ENCODE measurements at regions of chr3 and their contacts with region 1.

Region 1: DNA sequence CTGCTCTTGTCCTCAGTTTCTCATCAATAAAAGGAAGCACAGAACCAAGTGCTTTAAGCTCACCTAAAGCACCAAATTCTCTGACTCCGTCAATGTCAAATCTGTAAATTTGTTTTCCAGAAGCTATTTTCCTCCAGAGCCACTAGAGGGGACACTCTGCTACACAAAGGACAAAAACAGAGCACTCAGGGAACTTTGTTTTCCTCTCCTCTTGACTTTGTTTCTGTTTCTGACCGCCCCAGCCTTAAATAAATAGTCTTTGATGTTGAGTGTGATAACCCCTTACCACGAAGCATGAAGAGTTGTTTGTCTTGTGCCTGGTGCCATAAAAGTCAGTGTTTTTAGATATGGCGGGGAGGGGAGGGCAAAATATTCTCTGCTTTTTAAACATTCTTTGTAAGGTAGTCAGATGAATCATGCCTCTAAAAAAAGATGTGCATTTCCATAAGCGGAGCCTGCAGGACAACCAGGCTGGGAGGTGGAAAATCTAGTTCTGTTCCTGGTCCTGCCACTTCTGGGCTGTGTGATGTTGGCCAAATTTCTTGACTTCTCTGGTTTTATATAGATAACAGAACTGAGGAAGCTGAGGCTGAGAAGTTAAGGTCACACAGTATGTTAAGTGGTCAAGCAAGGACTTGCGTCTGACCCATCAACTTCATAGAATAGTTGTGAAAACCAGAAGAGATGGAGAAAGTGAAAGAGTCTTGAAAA is 7.3 kb upstream of the ZBTB38 start:
- DNase-seq: peak; percentile 59 to 94
- H3K4me3 ChIP-seq: no peak overlapping the region
- H3K27ac ChIP-seq: no peak overlapping the region
- H3K4me1 ChIP-seq: peaks cover 8% of the 10 kb centered on the region
- H3K27me3 ChIP-seq: peaks cover 9% of the 10 kb centered on the region
- CTCF ChIP-seq: peak; percentile 84

Region 2: GRCh38 chr3:140941434-140942220 is 419.4 kb before region 1 on chr3 and contains the start of gene SLC25A36:
- CTCF ChIA-PET with region 1: no interaction called
- POLR2A ChIA-PET with region 1: no interaction called
- intact Hi-C with region 1: no loop called
- DNase-seq: peak; percentile 96
- H3K4me3 ChIP-seq: peak within 1 kb of the TSS; percentile 76
- H3K27ac ChIP-seq: peak within 1 kb of the TSS; percentile 77
- H3K4me1 ChIP-seq: peaks cover 18% of the 10 kb centered on the region
- H3K27me3 ChIP-seq: no peaks in the 10 kb centered on the region
- CTCF ChIP-seq: no peak
- total RNA-seq, gene SLC25A36: 76.5 and 90.1 TPM in 2 replicates

Region 3: GRCh38 chr3:141311496-141312353 is 49.3 kb before region 1 on chr3:
- CTCF ChIA-PET with region 1: interaction called, 14 read pairs
- POLR2A ChIA-PET with region 1: no interaction called
- intact Hi-C with region 1: loop called (anchors 1 kb)
- DNase-seq: peak; percentile 89 to 99
- H3K4me3 ChIP-seq: peak overlapping the region; percentile 79
- H3K27ac ChIP-seq: no peak overlapping the region
- H3K4me1 ChIP-seq: peaks cover 7% of the 10 kb centered on the region
- H3K27me3 ChIP-seq: no peaks in the 10 kb centered on the region
- CTCF ChIP-seq: peak; percentile 73

Region 4: GRCh38 chr3:141326123-141326522 is 34.9 kb before region 1 on chr3:
- CTCF ChIA-PET with region 1: no interaction called
- POLR2A ChIA-PET with region 1: no interaction called
- intact Hi-C with region 1: no loop called
- DNase-seq: no peak
- H3K4me3 ChIP-seq: no peak overlapping the region
- H3K27ac ChIP-seq: no peak overlapping the region
- H3K4me1 ChIP-seq: peaks cover 9% of the 10 kb centered on the region
- H3K27me3 ChIP-seq: no peaks in the 10 kb centered on the region
- CTCF ChIP-seq: no peak

Region 5: DNA sequence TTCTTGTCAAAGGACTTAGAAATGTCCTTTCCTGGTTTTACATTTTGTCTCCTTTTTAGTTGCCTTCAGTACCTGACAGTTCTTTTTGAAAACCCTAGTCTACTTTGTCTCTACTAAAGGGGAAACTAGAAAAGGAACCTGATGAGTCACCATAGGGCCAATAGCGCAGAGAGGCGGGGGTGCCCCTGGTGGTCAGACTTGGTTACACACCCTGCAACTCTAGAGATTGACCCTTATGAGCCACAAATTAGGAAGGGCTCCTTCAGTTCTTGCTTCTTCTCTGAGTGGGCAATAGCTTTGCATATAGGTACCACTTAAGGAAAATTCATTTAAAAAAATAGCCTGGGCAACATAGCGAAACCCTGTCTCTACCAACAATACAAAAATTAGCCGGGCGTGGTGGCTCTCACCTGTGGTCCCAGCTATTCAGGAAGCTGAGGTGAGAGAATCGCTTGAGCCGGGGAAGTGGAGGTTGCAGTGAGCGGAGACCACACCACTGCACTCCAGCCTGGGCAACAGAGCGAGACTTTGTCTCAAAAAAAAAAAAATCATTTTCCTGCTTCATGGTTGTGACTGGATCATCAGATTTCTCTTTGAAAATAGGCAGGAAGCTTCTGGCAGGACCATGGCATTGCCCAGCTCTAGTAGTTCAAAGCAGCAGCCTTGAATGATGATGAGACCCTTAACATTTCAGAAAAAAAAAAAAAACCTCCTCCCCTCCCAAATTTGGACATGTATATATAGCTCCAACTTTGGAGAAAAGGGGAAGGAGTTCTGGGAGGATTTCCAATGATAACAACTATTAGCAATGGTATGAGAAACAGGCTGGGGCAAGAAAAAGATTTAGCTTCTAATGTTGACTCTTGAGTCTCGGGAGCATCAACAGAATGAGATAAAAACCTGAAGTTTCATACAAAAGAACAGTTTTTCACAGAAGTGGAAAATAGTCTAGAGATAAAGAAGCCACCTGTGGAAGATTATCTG is 80.6 kb after region 1 on chr3:
- CTCF ChIA-PET with region 1: interaction called, 12 read pairs
- POLR2A ChIA-PET with region 1: no interaction called
- intact Hi-C with region 1: no loop called
- DNase-seq: peak; percentile 51 to 74
- H3K4me3 ChIP-seq: no peak overlapping the region
- H3K27ac ChIP-seq: no peak overlapping the region
- H3K4me1 ChIP-seq: 0 out of 2 replicates have a peak, but pooled peaks cover 3% of the 10 kb centered on the region
- H3K27me3 ChIP-seq: no peaks in the 10 kb centered on the region
- CTCF ChIP-seq: peak; percentile 91

Region 6: DNA sequence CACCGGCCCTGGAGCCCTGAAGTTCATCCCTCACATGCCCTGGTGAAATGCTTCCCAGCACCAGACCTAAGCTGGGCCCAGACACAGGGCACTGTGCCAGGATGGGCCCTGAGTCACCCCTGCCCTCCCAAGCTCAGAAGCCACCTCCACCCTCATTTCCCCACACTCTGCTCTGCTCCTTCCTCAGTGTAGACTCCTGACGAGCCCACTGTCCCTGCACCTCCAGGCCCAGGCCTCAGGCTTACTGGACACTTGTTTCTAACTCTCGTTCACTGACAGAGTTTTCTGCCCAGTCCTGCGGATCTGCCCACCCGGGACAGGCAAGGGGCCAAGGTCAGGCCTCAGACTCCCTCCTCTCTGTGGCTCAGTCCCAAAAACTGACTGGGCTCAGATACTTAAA is 264.5 kb after region 1 on chr3:
- CTCF ChIA-PET with region 1: no interaction called
- POLR2A ChIA-PET with region 1: no interaction called
- intact Hi-C with region 1: no loop called
- DNase-seq: peak in 1 of 2 experiments; percentile 18
- H3K4me3 ChIP-seq: no peak overlapping the region
- H3K27ac ChIP-seq: no peak overlapping the region
- H3K4me1 ChIP-seq: no peaks in the 10 kb centered on the region
- H3K27me3 ChIP-seq: no peaks in the 10 kb centered on the region
- CTCF ChIP-seq: no peak

Region 7: DNA sequence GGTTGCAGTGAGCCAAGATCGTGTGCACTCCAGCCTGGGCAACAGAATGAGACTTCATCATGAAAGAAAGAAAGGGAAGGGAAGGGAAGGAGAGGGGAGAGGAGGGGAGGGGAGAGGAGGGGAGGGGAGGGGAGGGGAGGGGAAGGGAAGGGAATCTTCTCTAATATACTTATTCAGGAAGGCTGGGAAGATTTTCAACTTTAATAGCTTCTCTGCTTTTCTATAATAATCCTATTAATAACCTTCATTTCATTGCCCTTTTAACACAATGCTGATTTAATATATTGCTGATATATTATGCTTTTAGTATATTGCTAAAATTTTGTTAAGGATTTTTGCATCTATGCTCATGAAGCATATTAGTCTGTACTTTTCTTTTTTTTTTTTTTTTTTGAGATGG is 353.6 kb after region 1 on chr3:
- CTCF ChIA-PET with region 1: interaction called, 13 read pairs
- POLR2A ChIA-PET with region 1: no interaction called
- intact Hi-C with region 1: no loop called
- DNase-seq: no peak
- H3K4me3 ChIP-seq: no peak overlapping the region
- H3K27ac ChIP-seq: no peak overlapping the region
- H3K4me1 ChIP-seq: no peaks in the 10 kb centered on the region
- H3K27me3 ChIP-seq: no peaks in the 10 kb centered on the region
- CTCF ChIP-seq: no peak

Measured in PC-9 (cell line).